CD8-positive, alpha-beta T cell (primary cell): ENCODE measurements at regions of chr9 and their contacts with region 1.

Region 1: GRCh38 chr9:136849038-136849959 is at the start of gene PHPT1:
- DNase-seq: peak; percentile 91 to 98 (median 96)
- ATAC-seq: peak; percentile 92
- H3K4me3 ChIP-seq: peak within 1 kb of the TSS; percentile 77 to 99
- H3K4me3 Mint-ChIP-seq: peak within 1 kb of the TSS; percentile 93
- H3K27ac ChIP-seq: peak within 1 kb of the TSS; percentile 47 to 68
- H3K27ac Mint-ChIP-seq: peak within 1 kb of the TSS; percentile 88
- H3K4me1 ChIP-seq: peaks cover 29% of the 10 kb centered on the region
- H3K4me1 Mint-ChIP-seq: peaks cover 15% of the 10 kb centered on the region
- H3K27me3 ChIP-seq: peaks cover 3 to 11% of the 10 kb centered on the region in 2 experiments
- H3K27me3 Mint-ChIP-seq: peaks cover 9% of the 10 kb centered on the region
- CTCF ChIP-seq: no peak
- total RNA-seq, gene PHPT1: 15.7 to 17.1 TPM

Region 2: DNA sequence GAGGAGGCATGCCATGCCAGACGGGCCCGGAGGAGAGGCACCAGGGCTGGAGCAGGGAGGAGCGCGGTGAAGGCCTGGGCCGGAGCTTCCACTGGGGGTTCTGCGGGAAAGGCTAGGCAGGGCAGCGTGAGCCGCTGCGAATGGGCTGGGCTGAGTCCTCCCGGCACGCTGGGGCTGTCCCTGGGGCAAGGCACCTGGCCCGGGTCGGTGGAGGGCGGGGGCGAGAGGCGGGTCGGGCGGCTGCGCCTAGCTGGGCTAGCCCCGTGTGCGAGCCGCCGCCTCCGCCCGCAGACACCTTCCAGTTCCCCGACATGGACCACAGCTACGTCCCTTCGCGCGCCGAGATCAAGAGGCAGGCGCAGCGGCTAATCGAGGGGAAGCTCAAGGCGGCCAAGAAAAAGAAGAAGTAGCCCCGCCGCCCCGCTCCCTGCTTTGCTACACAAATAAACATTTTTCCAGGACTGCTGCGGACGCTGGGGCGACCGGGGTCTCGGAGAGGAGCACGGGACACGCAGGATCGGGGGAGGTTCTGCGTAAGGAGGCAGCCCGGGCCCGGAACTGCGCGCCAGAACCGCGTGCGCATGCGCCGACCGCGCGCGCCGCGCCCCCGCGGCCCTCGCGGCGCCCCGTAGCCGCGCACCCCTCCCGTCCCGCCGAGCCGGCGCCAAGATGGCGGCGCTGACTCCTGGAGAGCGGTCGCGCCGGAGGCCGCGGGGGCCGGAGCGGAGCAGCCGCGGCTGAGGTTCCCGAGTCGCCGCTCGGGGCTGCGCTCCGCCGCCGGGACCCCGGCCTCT is 41.8 kb before region 1 on chr9 and contains the start of gene RABL6:
- CTCF ChIA-PET with region 1: interaction called, 11 read pairs
- POLR2A ChIA-PET with region 1: interaction called, 6 read pairs
- intact Hi-C with region 1: loop called (anchors 2 kb)
- DNase-seq: peak; percentile 64 to 92 (median 81)
- ATAC-seq: peak; percentile 85
- H3K4me3 ChIP-seq: peak within 1 kb of the TSS; percentile 78 to 92
- H3K4me3 Mint-ChIP-seq: peak within 1 kb of the TSS; percentile 88
- H3K27ac ChIP-seq: peak within 1 kb of the TSS; percentile 66 to 79
- H3K27ac Mint-ChIP-seq: peak within 1 kb of the TSS; percentile 89
- H3K4me1 ChIP-seq: peaks cover 26% of the 10 kb centered on the region
- H3K4me1 Mint-ChIP-seq: peaks cover 34% of the 10 kb centered on the region
- H3K27me3 ChIP-seq: no peaks in the 10 kb centered on the region
- H3K27me3 Mint-ChIP-seq: no peaks in the 10 kb centered on the region
- CTCF ChIP-seq: no peak
- total RNA-seq, gene RABL6: 53.3 to 55.5 TPM

Region 3: GRCh38 chr9:136820971-136821825 is 28.1 kb before region 1 on chr9:
- CTCF ChIA-PET with region 1: interaction called, 14 read pairs
- POLR2A ChIA-PET with region 1: no interaction called
- intact Hi-C with region 1: no loop called
- DNase-seq: peak in 1 of 9 experiments; percentile 11
- ATAC-seq: no peak
- H3K4me3 ChIP-seq: no peak overlapping the region
- H3K4me3 Mint-ChIP-seq: no peak overlapping the region
- H3K27ac ChIP-seq: no peak overlapping the region
- H3K27ac Mint-ChIP-seq: no peak overlapping the region
- H3K4me1 ChIP-seq: no peaks in the 10 kb centered on the region
- H3K4me1 Mint-ChIP-seq: peaks cover 8% of the 10 kb centered on the region
- H3K27me3 ChIP-seq: no peaks in the 10 kb centered on the region
- H3K27me3 Mint-ChIP-seq: no peaks in the 10 kb centered on the region
- CTCF ChIP-seq: no peak

Region 4: GRCh38 chr9:136865735-136866103 is 16.4 kb after region 1 on chr9:
- CTCF ChIA-PET with region 1: interaction called, 6 read pairs
- POLR2A ChIA-PET with region 1: interaction called, 3 read pairs
- intact Hi-C with region 1: loop called (anchors 1 kb)
- DNase-seq: peak in 1 of 9 experiments; percentile 29
- ATAC-seq: peak; percentile 16
- H3K4me3 ChIP-seq: peak overlapping the region; percentile 64 to 78
- H3K4me3 Mint-ChIP-seq: peak overlapping the region; percentile 87
- H3K27ac ChIP-seq: peak overlapping the region; percentile 59 to 80
- H3K27ac Mint-ChIP-seq: peak overlapping the region; percentile 66
- H3K4me1 ChIP-seq: peaks cover 16% of the 10 kb centered on the region
- H3K4me1 Mint-ChIP-seq: peaks cover 23% of the 10 kb centered on the region
- H3K27me3 ChIP-seq: no peaks in the 10 kb centered on the region
- H3K27me3 Mint-ChIP-seq: no peaks in the 10 kb centered on the region
- CTCF ChIP-seq: no peak

Region 5: GRCh38 chr9:136944519-136945279 is 95.4 kb after region 1 on chr9 and contains the starts of genes C8G and FBXW5:
- CTCF ChIA-PET with region 1: no interaction called
- POLR2A ChIA-PET with region 1: no interaction called
- intact Hi-C with region 1: loop called in 1 of 2 experiments (anchors 1 kb)
- DNase-seq: peak; percentile 87 to 98 (median 93)
- ATAC-seq: peak; percentile 87
- H3K4me3 ChIP-seq: peak within 1 kb of the TSS; percentile 63 to 79
- H3K4me3 Mint-ChIP-seq: peak within 1 kb of the TSS; percentile 82
- H3K27ac ChIP-seq: peak within 1 kb of the TSS; percentile 28 to 48
- H3K27ac Mint-ChIP-seq: peak within 1 kb of the TSS; percentile 62
- H3K4me1 ChIP-seq: peaks cover 16% of the 10 kb centered on the region
- H3K4me1 Mint-ChIP-seq: peaks cover 12% of the 10 kb centered on the region
- H3K27me3 ChIP-seq: no peaks in the 10 kb centered on the region
- H3K27me3 Mint-ChIP-seq: no peaks in the 10 kb centered on the region
- CTCF ChIP-seq: peak; percentile 96
- total RNA-seq, gene C8G: not detected
- total RNA-seq, gene FBXW5: 38.4 to 39.5 TPM